ENCODE measurements at regions of chr18 and their contacts with region 1.

Region 1: GRCh38 chr18:74342416-74343043 is 26.9 kb downstream of the C18orf63 start:
- DNase-seq: no peak
- H3K4me3 ChIP-seq: no peak overlapping the region
- CTCF ChIP-seq: no peak
- POLR2A ChIP-seq: no peak

Region 2: DNA sequence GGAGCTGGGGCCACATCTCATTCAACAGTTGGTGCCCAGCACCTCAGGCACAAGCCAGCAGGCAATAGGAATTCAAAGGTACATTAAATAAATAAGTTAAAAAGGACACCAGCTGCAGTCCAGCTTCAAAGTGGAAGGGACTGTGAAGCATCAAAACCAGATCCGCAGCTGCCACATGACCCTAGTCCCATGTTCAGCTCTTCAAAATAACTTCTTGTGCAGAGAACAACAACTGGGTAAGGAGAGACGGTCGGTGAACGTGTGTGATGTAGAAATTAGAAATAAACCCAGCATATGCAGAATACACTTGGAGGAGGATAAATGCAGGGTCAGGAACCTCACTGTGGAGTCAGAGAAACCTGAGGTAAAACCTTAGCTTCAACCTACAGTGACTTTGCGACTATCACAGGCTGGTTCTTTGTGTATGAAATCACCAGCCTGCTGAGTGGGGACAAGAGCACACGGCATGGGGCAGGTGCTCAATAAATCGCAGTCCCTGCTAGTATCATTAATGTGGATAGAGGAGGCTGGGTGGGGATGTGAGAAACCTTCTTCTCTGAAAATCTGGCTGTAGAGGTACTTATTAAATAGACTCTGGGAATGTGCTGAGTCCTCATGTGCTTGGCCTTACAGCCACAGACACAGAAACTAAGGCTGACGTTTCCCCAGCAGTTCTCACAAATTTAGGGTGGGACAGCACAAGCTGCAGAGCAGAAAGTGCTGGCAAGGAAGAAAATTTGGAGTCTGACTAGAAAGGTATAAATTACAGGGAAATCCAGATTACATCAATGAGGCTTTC is 215.6 kb before region 1 on chr18:
- intact Hi-C with region 1: no loop called
- DNase-seq: no peak
- H3K4me3 ChIP-seq: no peak overlapping the region
- CTCF ChIP-seq: no peak
- POLR2A ChIP-seq: no peak

Region 3: GRCh38 chr18:74196220-74197119 is 146.1 kb before region 1 on chr18:
- intact Hi-C with region 1: loop called (anchors 5 kb)
- DNase-seq: peak in 1 of 2 donors; percentile 29
- H3K4me3 ChIP-seq: no peak overlapping the region
- CTCF ChIP-seq: peak in 1 of 3 donors; percentile 52
- POLR2A ChIP-seq: no peak

Measured in lower leg skin (tissue), 4 donors.